Activated CD4-positive, alpha-beta memory T cell treated with anti-CD3 and anti-CD28 coated beads, Interleukin-2, amount 10 ng/mL, durations not matched to agents 7 days and 5 days (primary cell): ENCODE measurements at regions of chr1 and their contacts with region 1.

Region 1: GRCh38 chr1:115138968-115139367 is 49.7 kb upstream of the TSPAN2 start:
- DNase-seq: peak; percentile 68
- H3K4me3 Mint-ChIP-seq: peak overlapping the region; percentile 21
- H3K27ac Mint-ChIP-seq: no peak overlapping the region
- H3K4me1 Mint-ChIP-seq: peaks cover 4% of the 10 kb centered on the region
- H3K27me3 Mint-ChIP-seq: peaks cover 25% of the 10 kb centered on the region

Region 2: GRCh38 chr1:115089420-115090185 is 49.4 kb before region 1 on chr1 and contains the start of gene TSPAN2:
- CTCF ChIA-PET with region 1: no interaction called
- POLR2A ChIA-PET with region 1: no interaction called
- DNase-seq: peak; percentile 53
- H3K4me3 Mint-ChIP-seq: peak within 1 kb of the TSS; percentile 76
- H3K27ac Mint-ChIP-seq: no peak within 1 kb of the TSS
- H3K4me1 Mint-ChIP-seq: peaks cover 35% of the 10 kb centered on the region
- H3K27me3 Mint-ChIP-seq: peaks cover 7% of the 10 kb centered on the region
- total RNA-seq, gene TSPAN2: 2.4 to 3.4 TPM

Region 3: GRCh38 chr1:115123116-115123515 is 15.9 kb before region 1 on chr1:
- CTCF ChIA-PET with region 1: interaction called, 17 read pairs
- POLR2A ChIA-PET with region 1: no interaction called
- DNase-seq: no peak
- H3K4me3 Mint-ChIP-seq: no peak overlapping the region
- H3K27ac Mint-ChIP-seq: no peak overlapping the region
- H3K4me1 Mint-ChIP-seq: no peaks in the 10 kb centered on the region
- H3K27me3 Mint-ChIP-seq: peaks cover 24% of the 10 kb centered on the region

Region 4: GRCh38 chr1:115153966-115154557 is 15.1 kb after region 1 on chr1:
- CTCF ChIA-PET with region 1: no interaction called
- POLR2A ChIA-PET with region 1: no interaction called
- DNase-seq: no peak
- H3K4me3 Mint-ChIP-seq: no peak overlapping the region
- H3K27ac Mint-ChIP-seq: no peak overlapping the region
- H3K4me1 Mint-ChIP-seq: no peaks in the 10 kb centered on the region
- H3K27me3 Mint-ChIP-seq: peaks cover 10% of the 10 kb centered on the region

Region 5: DNA sequence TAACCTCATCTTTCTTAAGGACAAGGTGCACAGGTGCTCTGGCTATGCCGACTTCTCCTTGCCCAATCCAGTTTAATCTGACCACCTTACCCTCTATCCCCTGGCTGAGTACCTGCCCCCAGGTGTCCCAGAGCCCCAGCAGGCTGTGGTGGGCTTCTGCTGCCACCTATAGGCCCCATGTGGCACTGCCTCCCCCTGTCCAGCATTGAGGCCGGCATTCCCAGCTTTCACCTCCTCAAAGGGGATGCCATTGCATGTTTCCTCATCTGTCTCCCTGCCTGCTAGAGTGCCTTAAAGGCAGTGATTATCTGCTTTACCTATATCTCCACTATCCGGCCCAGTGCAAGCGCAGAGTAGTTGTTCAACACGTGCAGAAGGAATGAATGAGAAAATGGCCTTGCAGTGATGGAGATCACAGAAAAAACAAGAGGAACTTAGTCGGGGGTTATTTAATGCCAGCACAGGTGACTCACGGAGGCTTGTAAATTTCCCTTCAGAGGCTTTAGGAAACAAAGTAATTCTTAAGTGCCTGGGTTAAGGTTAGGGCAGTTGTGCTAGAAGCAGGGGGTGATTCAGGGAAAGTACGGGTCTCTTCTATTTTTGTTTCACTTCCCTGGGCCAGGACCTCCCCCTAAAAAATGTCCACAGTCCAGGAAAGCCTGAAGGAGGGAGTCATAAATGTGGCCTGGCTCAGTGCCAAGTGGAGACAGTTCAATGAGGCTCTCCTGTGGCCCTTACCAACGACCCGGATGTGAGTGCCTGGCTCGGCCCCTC is 330.9 kb after region 1 on chr1:
- CTCF ChIA-PET with region 1: interaction called, 15 read pairs
- POLR2A ChIA-PET with region 1: no interaction called
- DNase-seq: peak; percentile 28
- H3K4me3 Mint-ChIP-seq: no peak overlapping the region
- H3K27ac Mint-ChIP-seq: no peak overlapping the region
- H3K4me1 Mint-ChIP-seq: no peaks in the 10 kb centered on the region
- H3K27me3 Mint-ChIP-seq: peaks cover 3% of the 10 kb centered on the region

Region 6: GRCh38 chr1:115595279-115596079 is 456.5 kb after region 1 on chr1:
- CTCF ChIA-PET with region 1: interaction called, 17 read pairs
- POLR2A ChIA-PET with region 1: no interaction called
- DNase-seq: peak; percentile 73
- H3K4me3 Mint-ChIP-seq: no peak overlapping the region
- H3K27ac Mint-ChIP-seq: no peak overlapping the region
- H3K4me1 Mint-ChIP-seq: no peaks in the 10 kb centered on the region
- H3K27me3 Mint-ChIP-seq: no peaks in the 10 kb centered on the region